ENCODE measurements at regions of chr2 and their contacts with region 1.

Region 1: DNA sequence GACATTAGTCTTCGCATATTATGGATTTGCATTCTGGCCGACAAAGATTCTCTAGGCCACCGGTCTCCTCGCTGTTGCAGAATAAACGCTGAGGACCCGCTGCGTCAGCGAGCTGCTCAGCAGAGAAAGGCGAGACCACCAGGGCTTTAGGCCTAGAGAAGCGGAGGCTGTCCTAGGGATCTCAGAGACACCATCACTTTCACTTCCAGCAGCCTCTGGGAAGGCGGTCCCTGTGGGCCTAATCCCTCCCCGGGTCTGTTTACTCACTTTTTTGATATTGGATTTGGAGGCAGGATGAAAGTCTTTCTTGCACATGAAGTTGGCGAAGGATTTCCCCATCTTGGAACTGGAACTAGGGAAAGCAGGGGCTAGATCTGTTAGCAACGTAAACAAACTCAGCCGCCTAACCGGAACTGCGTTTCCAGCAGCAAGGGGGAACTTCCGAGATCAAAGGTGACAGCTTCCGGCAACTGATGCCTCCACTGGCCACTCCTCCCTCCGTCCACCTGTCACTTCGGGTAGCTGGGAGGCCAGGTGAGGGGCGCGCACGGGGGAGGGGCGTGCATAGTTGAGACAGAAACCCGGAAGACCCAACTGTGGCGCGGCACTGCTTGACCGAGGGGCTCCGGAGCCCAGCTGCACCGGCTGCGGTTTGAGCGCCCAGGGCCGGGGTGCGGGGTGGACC is at the start of gene SCRN3:
- DNase-seq: peak; percentile 38 to 87 (median 76)
- ATAC-seq: peak; percentile 87 to 94 (median 92)
- H3K4me3 ChIP-seq: peak within 1 kb of the TSS; percentile 78 to 87
- H3K4me3 Mint-ChIP-seq: peak within 1 kb of the TSS; percentile 98 to 99 (median 99)
- H3K27ac ChIP-seq: peak within 1 kb of the TSS; percentile 86
- H3K27ac Mint-ChIP-seq: peak within 1 kb of the TSS; percentile 99 to 100
- H3K4me1 ChIP-seq: peaks cover 11 to 19% of the 10 kb centered on the region in 2 experiments
- H3K4me1 Mint-ChIP-seq: peaks cover 52 to 72% (median 64%) of the 10 kb centered on the region in 3 donors
- H3K27me3 ChIP-seq: no peaks in the 10 kb centered on the region
- H3K27me3 Mint-ChIP-seq: no peaks in the 10 kb centered on the region
- total RNA-seq, gene SCRN3: 11.3 to 17.9 (median 14.8) TPM

Region 2: DNA sequence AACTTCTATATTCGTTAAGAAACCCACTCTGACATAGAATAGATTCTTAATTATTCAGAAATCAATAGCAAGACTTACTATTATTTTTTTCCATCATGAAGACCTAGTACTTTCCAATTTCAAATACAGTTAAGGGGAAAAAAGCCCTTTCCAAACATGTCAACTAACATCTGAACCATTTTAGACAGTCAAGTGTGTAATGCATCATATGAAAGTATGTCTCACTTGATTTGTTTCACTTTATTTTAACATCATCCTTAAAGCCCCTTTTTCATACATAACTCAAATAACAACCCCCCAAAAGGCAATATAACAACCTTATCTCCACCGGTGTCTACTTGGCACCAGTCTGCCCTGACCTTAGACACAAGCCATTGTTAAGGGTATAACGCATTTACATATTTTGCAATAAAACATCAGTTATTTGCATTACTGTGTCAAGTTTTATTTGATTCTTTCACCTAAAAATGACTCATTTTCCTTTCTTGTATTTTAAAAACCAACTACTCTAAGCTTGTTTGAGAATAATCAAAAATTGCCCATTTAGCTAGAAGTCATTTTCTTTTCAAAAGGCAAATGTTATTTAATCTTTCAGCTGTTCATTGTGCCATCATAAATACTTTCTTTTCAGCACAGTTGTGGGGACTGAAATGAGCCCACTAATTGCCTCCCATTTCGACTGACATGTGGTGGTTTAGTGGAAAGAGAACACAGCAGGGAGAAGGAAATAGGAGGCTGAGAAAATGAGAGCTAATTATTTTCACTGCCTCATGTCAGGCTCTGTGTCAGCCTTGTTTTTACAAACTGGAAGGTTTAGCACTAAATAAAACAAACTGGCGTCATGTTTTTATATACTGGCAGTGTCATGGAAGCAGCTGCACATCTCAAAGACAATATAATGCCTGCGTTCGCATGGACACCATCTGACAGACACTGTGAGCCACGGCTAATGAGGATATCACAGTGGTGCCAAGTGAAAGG is 1145.5 kb before region 1 on chr2:
- CTCF ChIA-PET with region 1: no interaction called
- POLR2A ChIA-PET with region 1: no interaction called
- DNase-seq: no peak
- ATAC-seq: no peak
- H3K4me3 ChIP-seq: no peak overlapping the region
- H3K4me3 Mint-ChIP-seq: no peak overlapping the region
- H3K27ac ChIP-seq: no peak overlapping the region
- H3K27ac Mint-ChIP-seq: no peak overlapping the region
- H3K4me1 ChIP-seq: no peaks in the 10 kb centered on the region
- H3K4me1 Mint-ChIP-seq: no peaks in the 10 kb centered on the region
- H3K27me3 ChIP-seq: no peaks in the 10 kb centered on the region
- H3K27me3 Mint-ChIP-seq: peaks cover 0 to 6% of the 10 kb centered on the region in 2 donors

Region 3: GRCh38 chr2:174376967-174377366 is 18.5 kb before region 1 on chr2:
- CTCF ChIA-PET with region 1: no interaction called
- POLR2A ChIA-PET with region 1: interaction called, 4 to 14 read pairs
- DNase-seq: no peak
- ATAC-seq: no peak
- H3K4me3 ChIP-seq: no peak overlapping the region
- H3K4me3 Mint-ChIP-seq: no peak overlapping the region
- H3K27ac ChIP-seq: no peak overlapping the region
- H3K27ac Mint-ChIP-seq: no peak overlapping the region
- H3K4me1 ChIP-seq: no peaks in the 10 kb centered on the region
- H3K4me1 Mint-ChIP-seq: peaks cover 0 to 6% (median 0%) of the 10 kb centered on the region in 3 donors
- H3K27me3 ChIP-seq: no peaks in the 10 kb centered on the region
- H3K27me3 Mint-ChIP-seq: no peaks in the 10 kb centered on the region

Region 4: DNA sequence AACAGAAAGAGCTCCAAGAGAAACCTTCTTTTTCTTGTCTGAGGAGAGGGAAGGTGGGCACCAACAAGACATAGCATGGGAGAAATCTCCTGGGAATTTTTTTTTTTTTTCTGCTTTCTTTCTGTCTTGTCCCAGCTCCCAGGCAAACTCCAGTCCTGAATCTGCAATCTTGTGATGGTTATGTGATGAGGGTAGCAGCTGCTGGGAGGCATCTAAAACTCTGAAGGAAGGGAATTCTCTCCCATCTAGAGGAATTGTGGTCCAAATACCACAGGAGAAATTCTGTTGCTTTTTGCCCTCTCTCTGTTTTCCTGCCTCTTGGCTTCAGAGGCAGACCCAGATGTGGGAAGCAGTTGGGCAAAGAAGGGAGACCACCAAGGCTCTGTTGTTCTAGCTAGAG is 16.8 kb after region 1 on chr2:
- CTCF ChIA-PET with region 1: interaction called in 1 of 2 experiments, 4 read pairs
- POLR2A ChIA-PET with region 1: interaction called in 1 of 2 experiments, 15 read pairs
- DNase-seq: no peak
- ATAC-seq: no peak
- H3K4me3 ChIP-seq: no peak overlapping the region
- H3K4me3 Mint-ChIP-seq: no peak overlapping the region
- H3K27ac ChIP-seq: no peak overlapping the region
- H3K27ac Mint-ChIP-seq: no peak overlapping the region
- H3K4me1 ChIP-seq: no peaks in the 10 kb centered on the region
- H3K4me1 Mint-ChIP-seq: no peaks in the 10 kb centered on the region
- H3K27me3 ChIP-seq: no peaks in the 10 kb centered on the region
- H3K27me3 Mint-ChIP-seq: no peaks in the 10 kb centered on the region